ENCODE measurements at regions of chr11 and their contacts with region 1.

Region 1: DNA sequence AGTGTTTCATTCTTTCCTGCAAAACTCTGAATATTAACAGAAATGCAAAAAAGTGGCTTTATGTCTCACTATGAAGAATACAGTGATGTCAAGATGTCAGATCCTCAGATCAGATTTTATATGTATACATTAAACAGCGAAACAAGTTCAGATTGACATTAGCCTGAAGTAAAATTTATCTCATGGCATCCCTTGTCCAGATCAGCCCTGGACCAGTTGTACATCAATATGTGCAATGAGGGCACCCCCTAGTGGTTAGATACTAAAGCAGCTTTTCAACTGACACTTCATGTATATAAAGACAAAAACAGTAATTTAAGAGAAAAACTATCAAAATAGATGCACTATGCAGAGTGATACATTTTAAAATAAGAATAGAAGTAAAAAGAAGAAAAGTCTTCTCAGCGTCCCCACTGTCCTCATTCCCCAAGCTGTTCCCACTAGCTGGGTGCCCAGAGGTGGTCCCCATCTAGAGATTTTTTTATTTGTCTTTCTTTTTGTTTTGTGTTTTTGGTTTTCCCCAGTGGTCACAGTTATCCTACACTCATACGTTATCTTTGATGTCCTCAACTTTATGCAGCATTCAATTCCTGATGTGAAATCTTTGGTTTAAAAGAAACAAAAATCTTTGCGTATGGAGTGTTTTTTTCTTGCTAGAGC is 2193.4 kb upstream of the RAG2 start:
- DNase-seq: no peak
- ATAC-seq: no peak
- H3K4me3 ChIP-seq: no peak overlapping the region
- H3K4me3 Mint-ChIP-seq: no peak overlapping the region
- H3K27ac ChIP-seq: no peak overlapping the region
- H3K27ac Mint-ChIP-seq: no peak overlapping the region
- H3K4me1 ChIP-seq: no peaks in the 10 kb centered on the region
- H3K4me1 Mint-ChIP-seq: no peaks in the 10 kb centered on the region
- H3K27me3 ChIP-seq: no peaks in the 10 kb centered on the region
- H3K27me3 Mint-ChIP-seq: no peaks in the 10 kb centered on the region

Region 2: DNA sequence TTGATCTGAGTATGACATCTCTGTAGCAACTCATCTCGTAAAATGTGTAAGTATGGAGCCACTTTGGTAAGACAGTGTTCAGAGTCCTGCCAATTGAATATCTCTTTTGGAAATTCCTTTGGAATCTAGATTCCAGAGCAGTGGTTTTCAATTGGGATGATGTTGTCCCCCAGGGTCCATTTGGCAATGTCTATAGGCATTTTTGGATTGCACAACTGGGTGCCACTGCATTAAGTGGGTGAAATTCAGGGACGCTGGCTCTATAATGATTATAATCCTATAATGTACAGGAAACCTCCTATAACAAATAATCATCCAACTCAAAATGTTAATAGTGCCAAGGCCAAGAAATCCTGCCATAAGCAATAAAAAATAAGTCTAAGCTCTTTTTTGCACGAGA is 1788.6 kb before region 1 on chr11:
- CTCF ChIA-PET with region 1: no interaction called
- POLR2A ChIA-PET with region 1: no interaction called
- intact Hi-C with region 1: loop called in 1 of 2 experiments (anchors 10 kb)
- DNase-seq: no peak
- ATAC-seq: no peak
- H3K4me3 ChIP-seq: no peak overlapping the region
- H3K4me3 Mint-ChIP-seq: no peak overlapping the region
- H3K27ac ChIP-seq: no peak overlapping the region
- H3K27ac Mint-ChIP-seq: no peak overlapping the region
- H3K4me1 ChIP-seq: no peaks in the 10 kb centered on the region
- H3K4me1 Mint-ChIP-seq: no peaks in the 10 kb centered on the region
- H3K27me3 ChIP-seq: no peaks in the 10 kb centered on the region
- H3K27me3 Mint-ChIP-seq: no peaks in the 10 kb centered on the region

Region 3: GRCh38 chr11:37946155-37946766 is 845.2 kb before region 1 on chr11:
- CTCF ChIA-PET with region 1: no interaction called
- POLR2A ChIA-PET with region 1: no interaction called
- intact Hi-C with region 1: loop called in 1 of 2 experiments (anchors 10 kb)
- DNase-seq: no peak
- ATAC-seq: no peak
- H3K4me3 ChIP-seq: no peak overlapping the region
- H3K4me3 Mint-ChIP-seq: no peak overlapping the region
- H3K27ac ChIP-seq: no peak overlapping the region
- H3K27ac Mint-ChIP-seq: no peak overlapping the region
- H3K4me1 ChIP-seq: no peaks in the 10 kb centered on the region
- H3K4me1 Mint-ChIP-seq: no peaks in the 10 kb centered on the region
- H3K27me3 ChIP-seq: no peaks in the 10 kb centered on the region
- H3K27me3 Mint-ChIP-seq: no peaks in the 10 kb centered on the region

Region 4: GRCh38 chr11:38425578-38425977 is 365.9 kb before region 1 on chr11:
- CTCF ChIA-PET with region 1: no interaction called
- POLR2A ChIA-PET with region 1: no interaction called
- intact Hi-C with region 1: no loop called
- DNase-seq: no peak
- ATAC-seq: no peak
- H3K4me3 ChIP-seq: no peak overlapping the region
- H3K4me3 Mint-ChIP-seq: no peak overlapping the region
- H3K27ac ChIP-seq: no peak overlapping the region
- H3K27ac Mint-ChIP-seq: no peak overlapping the region
- H3K4me1 ChIP-seq: no peaks in the 10 kb centered on the region
- H3K4me1 Mint-ChIP-seq: no peaks in the 10 kb centered on the region
- H3K27me3 ChIP-seq: no peaks in the 10 kb centered on the region
- H3K27me3 Mint-ChIP-seq: no peaks in the 10 kb centered on the region

Region 5: DNA sequence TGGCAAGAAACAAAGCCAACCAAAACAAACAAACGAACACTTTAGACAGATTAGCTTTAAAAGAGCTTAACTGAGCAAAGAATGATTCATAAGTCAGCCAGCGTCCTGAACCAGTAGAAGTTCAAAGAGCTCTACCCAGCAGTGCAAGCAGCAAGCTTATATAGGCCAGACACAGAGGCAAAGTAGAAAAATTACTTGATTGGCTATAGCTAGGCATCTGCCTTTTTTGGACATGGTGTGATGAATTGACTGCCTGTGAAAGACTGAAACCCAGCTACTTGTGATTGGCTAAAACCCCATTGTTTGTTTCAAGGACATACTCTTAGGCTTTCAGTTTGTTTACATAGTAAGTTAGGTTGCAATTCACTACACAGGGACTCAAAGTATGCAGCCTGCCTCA is 73.4 kb before region 1 on chr11:
- CTCF ChIA-PET with region 1: no interaction called
- POLR2A ChIA-PET with region 1: no interaction called
- intact Hi-C with region 1: no loop called
- DNase-seq: no peak
- ATAC-seq: no peak
- H3K4me3 ChIP-seq: no peak overlapping the region
- H3K4me3 Mint-ChIP-seq: no peak overlapping the region
- H3K27ac ChIP-seq: no peak overlapping the region
- H3K27ac Mint-ChIP-seq: no peak overlapping the region
- H3K4me1 ChIP-seq: no peaks in the 10 kb centered on the region
- H3K4me1 Mint-ChIP-seq: no peaks in the 10 kb centered on the region
- H3K27me3 ChIP-seq: no peaks in the 10 kb centered on the region
- H3K27me3 Mint-ChIP-seq: no peaks in the 10 kb centered on the region

Region 6: GRCh38 chr11:38809521-38809920 is 18.1 kb after region 1 on chr11:
- CTCF ChIA-PET with region 1: no interaction called
- POLR2A ChIA-PET with region 1: no interaction called
- intact Hi-C with region 1: no loop called
- DNase-seq: no peak
- ATAC-seq: no peak
- H3K4me3 ChIP-seq: no peak overlapping the region
- H3K4me3 Mint-ChIP-seq: no peak overlapping the region
- H3K27ac ChIP-seq: no peak overlapping the region
- H3K27ac Mint-ChIP-seq: no peak overlapping the region
- H3K4me1 ChIP-seq: no peaks in the 10 kb centered on the region
- H3K4me1 Mint-ChIP-seq: no peaks in the 10 kb centered on the region
- H3K27me3 ChIP-seq: no peaks in the 10 kb centered on the region
- H3K27me3 Mint-ChIP-seq: no peaks in the 10 kb centered on the region

Region 7: GRCh38 chr11:39374963-39375698 is 583.7 kb after region 1 on chr11:
- CTCF ChIA-PET with region 1: no interaction called
- POLR2A ChIA-PET with region 1: no interaction called
- intact Hi-C with region 1: loop called in 1 of 2 experiments (anchors 10 kb)
- DNase-seq: peak in 5 of 9 donors; percentile 29 to 42 (median 40)
- ATAC-seq: peak; percentile 61
- H3K4me3 ChIP-seq: no peak overlapping the region
- H3K4me3 Mint-ChIP-seq: no peak overlapping the region
- H3K27ac ChIP-seq: no peak overlapping the region
- H3K27ac Mint-ChIP-seq: no peak overlapping the region
- H3K4me1 ChIP-seq: peaks cover 0 to 8% of the 10 kb centered on the region in 2 donors
- H3K4me1 Mint-ChIP-seq: peaks cover 3 to 36% (median 27%) of the 10 kb centered on the region in 7 donors
- H3K27me3 ChIP-seq: no peaks in the 10 kb centered on the region
- H3K27me3 Mint-ChIP-seq: no peaks in the 10 kb centered on the region

Region 8: DNA sequence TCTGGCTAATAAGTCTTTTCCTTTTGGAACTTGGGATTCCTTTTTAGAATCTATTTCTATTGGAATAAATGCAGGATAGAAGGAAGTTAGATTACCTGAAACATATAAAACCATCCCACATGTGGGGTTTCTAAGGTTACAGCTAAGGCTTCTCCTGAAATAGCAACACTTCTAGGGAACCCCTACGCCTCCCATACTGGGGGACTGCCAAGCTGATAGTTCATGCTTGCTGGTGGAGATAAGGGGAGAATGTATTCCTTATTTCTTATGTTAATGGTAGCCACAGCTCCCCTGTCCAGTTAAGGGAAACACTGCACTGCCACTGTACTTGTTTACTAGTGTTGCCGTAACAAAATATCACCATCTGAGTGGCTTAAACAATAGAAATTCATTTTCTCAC is 1478.4 kb after region 1 on chr11:
- CTCF ChIA-PET with region 1: no interaction called
- POLR2A ChIA-PET with region 1: no interaction called
- intact Hi-C with region 1: no loop called
- DNase-seq: no peak
- ATAC-seq: no peak
- H3K4me3 ChIP-seq: no peak overlapping the region
- H3K4me3 Mint-ChIP-seq: no peak overlapping the region
- H3K27ac ChIP-seq: no peak overlapping the region
- H3K27ac Mint-ChIP-seq: no peak overlapping the region
- H3K4me1 ChIP-seq: no peaks in the 10 kb centered on the region
- H3K4me1 Mint-ChIP-seq: no peaks in the 10 kb centered on the region
- H3K27me3 ChIP-seq: no peaks in the 10 kb centered on the region
- H3K27me3 Mint-ChIP-seq: no peaks in the 10 kb centered on the region